Mucosa of descending colon (tissue), 3 donors: ENCODE measurements at regions of chr17 and their contacts with region 1.

Region 1: GRCh38 chr17:28494445-28495188 is 11.5 kb upstream of the FOXN1 start:
- DNase-seq: peak; percentile 75 to 88 (median 86)
- ATAC-seq: peak; percentile 64
- H3K4me3 ChIP-seq: no peak overlapping the region
- H3K4me1 ChIP-seq: peaks cover 12% of the 10 kb centered on the region
- CTCF ChIP-seq: peak; percentile 86

Region 2: GRCh38 chr17:28536532-28537238 is 42.1 kb after region 1 on chr17:
- intact Hi-C with region 1: loop called in 1 of 2 experiments (anchors 5 kb)
- DNase-seq: peak in 1 of 3 donors; percentile 45
- ATAC-seq: peak; percentile 48
- H3K4me3 ChIP-seq: no peak overlapping the region
- H3K4me1 ChIP-seq: peaks cover 17% of the 10 kb centered on the region
- CTCF ChIP-seq: no peak

Region 3: GRCh38 chr17:28547623-28548416 is 53.2 kb after region 1 on chr17:
- intact Hi-C with region 1: loop called in 1 of 2 experiments (anchors 5 kb)
- DNase-seq: peak; percentile 80 to 90 (median 87)
- ATAC-seq: peak; percentile 79
- H3K4me3 ChIP-seq: no peak overlapping the region
- H3K4me1 ChIP-seq: peaks cover 14% of the 10 kb centered on the region
- CTCF ChIP-seq: peak; percentile 95

Region 4: GRCh38 chr17:28792877-28793661 is 298.5 kb after region 1 on chr17:
- intact Hi-C with region 1: no loop called
- DNase-seq: no peak
- ATAC-seq: peak; percentile 20
- H3K4me3 ChIP-seq: no peak overlapping the region
- H3K4me1 ChIP-seq: no peaks in the 10 kb centered on the region
- CTCF ChIP-seq: no peak